Caki2 (cell line): ENCODE measurements at regions of chr20 and their contacts with region 1.

Region 1: GRCh38 chr20:44861531-44862006 is 23.9 kb upstream of the YWHAB start:
- DNase-seq: no peak

Region 2: GRCh38 chr20:44733341-44734069 is 128.1 kb before region 1 on chr20:
- in situ Hi-C with region 1: loop called (anchors 10 kb)
- DNase-seq: peak; percentile 71